Activated naive CD4-positive, alpha-beta T cell treated with anti-CD3 and anti-CD28 coated beads for 36 hours (primary cell): ENCODE measurements at regions of chr14 and their contacts with region 1.

Region 1: GRCh38 chr14:60514741-60515491 is 6.0 kb downstream of the SIX6 start:
- DNase-seq: no peak
- H3K4me3 Mint-ChIP-seq: peak overlapping the region; percentile 49
- H3K27ac Mint-ChIP-seq: no peak overlapping the region
- H3K4me1 Mint-ChIP-seq: peaks cover 19% of the 10 kb centered on the region
- H3K27me3 Mint-ChIP-seq: peaks cover 62% of the 10 kb centered on the region

Region 2: GRCh38 chr14:59656473-59656872 is 858.4 kb before region 1 on chr14:
- CTCF ChIA-PET with region 1: no interaction called
- intact Hi-C with region 1: no loop called
- DNase-seq: no peak
- H3K4me3 Mint-ChIP-seq: no peak overlapping the region
- H3K27ac Mint-ChIP-seq: no peak overlapping the region
- H3K4me1 Mint-ChIP-seq: no peaks in the 10 kb centered on the region
- H3K27me3 Mint-ChIP-seq: no peaks in the 10 kb centered on the region

Region 3: GRCh38 chr14:60349663-60350365 is 165.1 kb before region 1 on chr14:
- CTCF ChIA-PET with region 1: interaction called, 3 read pairs
- intact Hi-C with region 1: loop called (anchors 5 kb)
- DNase-seq: peak; percentile 51
- H3K4me3 Mint-ChIP-seq: no peak overlapping the region
- H3K27ac Mint-ChIP-seq: no peak overlapping the region
- H3K4me1 Mint-ChIP-seq: no peaks in the 10 kb centered on the region
- H3K27me3 Mint-ChIP-seq: peaks cover 3% of the 10 kb centered on the region

Region 4: DNA sequence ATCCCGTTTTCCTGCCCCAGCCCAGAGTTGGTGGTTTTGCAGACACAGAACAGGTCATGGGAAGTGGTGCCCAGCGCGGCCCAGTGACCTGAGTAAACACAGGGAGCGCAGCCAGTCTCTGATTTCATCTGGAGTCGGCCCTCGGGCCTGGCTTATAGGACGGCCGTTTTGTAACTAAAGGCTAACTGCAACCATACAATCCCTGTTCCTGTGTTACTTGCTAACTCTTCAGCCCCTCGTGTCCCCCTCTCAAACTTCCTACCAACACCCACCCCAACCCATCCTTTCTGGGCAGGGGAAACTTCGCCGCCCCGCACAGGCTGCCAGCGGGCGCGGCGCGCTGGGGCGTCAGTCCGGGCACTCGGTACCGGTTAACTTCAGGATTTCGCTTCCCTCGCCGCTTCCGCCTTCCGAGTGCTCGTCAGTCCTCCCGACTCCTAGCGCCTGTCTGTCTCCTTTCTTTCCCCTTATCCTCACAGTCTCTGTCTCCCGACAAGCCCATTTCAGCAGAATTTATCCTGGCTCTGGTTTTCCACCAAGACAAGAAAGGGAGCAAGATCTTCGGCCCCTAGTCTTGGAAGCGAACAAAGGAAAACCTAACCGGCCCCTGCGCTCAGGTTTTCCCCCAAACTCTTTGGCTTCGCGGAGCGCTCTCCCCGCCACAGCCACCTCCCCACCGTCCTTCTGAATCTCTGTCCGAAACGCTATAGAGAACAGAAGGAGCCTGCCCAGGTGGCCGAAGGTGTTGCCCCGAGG is 132.3 kb after region 1 on chr14:
- CTCF ChIA-PET with region 1: interaction called, 3 read pairs
- intact Hi-C with region 1: loop called (anchors 2 kb)
- DNase-seq: no peak
- H3K4me3 Mint-ChIP-seq: peak overlapping the region; percentile 38
- H3K27ac Mint-ChIP-seq: no peak overlapping the region
- H3K4me1 Mint-ChIP-seq: peaks cover 50% of the 10 kb centered on the region
- H3K27me3 Mint-ChIP-seq: peaks cover 85% of the 10 kb centered on the region